ENCODE measurements at regions of chr11 and their contacts with region 1.

Region 1: GRCh38 chr11:20127671-20128527 is 32.4 kb downstream of the DBX1 start:
- DNase-seq: peak; percentile 72 to 75
- H3K4me3 ChIP-seq: no peak overlapping the region
- H3K27ac ChIP-seq: no peak overlapping the region
- H3K4me1 ChIP-seq: no peaks in the 10 kb centered on the region
- H3K27me3 ChIP-seq: no peaks in the 10 kb centered on the region
- CTCF ChIP-seq: peak; percentile 72 to 82 (median 80)
- POLR2A ChIP-seq: no peak

Region 2: GRCh38 chr11:19947537-19948114 is 180.3 kb before region 1 on chr11:
- intact Hi-C with region 1: loop called (anchors 5 kb)
- DNase-seq: no peak
- H3K4me3 ChIP-seq: no peak overlapping the region
- H3K27ac ChIP-seq: no peak overlapping the region
- H3K4me1 ChIP-seq: no peaks in the 10 kb centered on the region
- H3K27me3 ChIP-seq: no peaks in the 10 kb centered on the region
- CTCF ChIP-seq: no peak
- POLR2A ChIP-seq: no peak